ENCODE measurements at regions of chr19 and their contacts with region 1.

Region 1: GRCh38 chr19:48795055-48795684 is 15.7 kb downstream of the BCAT2 start:
- H3K4me3 ChIP-seq: peak overlapping the region; percentile 54
- H3K27ac ChIP-seq: no peak overlapping the region; the same call in 1 of the 2 replicates
- H3K4me1 ChIP-seq: no peaks in the 10 kb centered on the region
- CTCF ChIP-seq: peak; percentile 99

Region 2: DNA sequence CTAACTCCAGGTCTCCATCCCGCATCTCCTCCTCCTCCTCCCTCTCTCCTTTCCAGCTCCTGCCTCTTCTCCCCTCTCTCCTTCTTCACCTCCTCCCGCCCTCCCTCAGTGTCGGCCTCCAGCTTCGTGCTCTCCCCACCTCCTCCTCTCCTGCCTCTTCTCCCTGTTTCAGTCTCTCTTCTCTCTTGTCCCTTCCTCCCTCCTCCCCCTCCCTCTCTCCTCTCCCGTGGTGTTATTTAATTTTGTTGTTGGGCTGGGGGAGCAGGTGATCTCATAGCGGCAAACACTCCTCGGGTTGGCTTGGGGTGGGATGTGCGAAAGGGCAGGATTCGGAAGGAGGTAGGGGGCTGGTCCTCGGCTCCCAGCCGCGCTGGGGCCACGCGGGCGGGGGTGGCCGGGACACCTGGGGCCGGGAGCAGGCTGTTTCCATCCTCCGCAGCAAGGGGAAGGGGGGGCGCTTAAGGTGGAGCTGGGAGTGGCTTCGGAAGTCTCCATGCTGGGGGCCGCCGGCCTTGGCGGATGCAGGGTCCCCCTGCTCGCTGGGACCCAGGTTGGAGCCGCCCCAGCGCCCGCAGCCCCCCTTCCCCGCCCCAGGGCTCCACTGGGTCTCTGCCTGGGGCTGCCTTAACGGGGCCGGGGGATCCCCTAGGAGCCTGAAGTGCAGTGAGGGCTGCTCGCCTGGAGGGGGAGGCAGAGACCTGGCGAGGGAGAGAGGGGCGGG is 149.0 kb before region 1 on chr19 and contains the start of gene CA11:
- CTCF ChIA-PET with region 1: interaction called, 11 read pairs
- POLR2A ChIA-PET with region 1: interaction called, 9 read pairs
- H3K4me3 ChIP-seq: peak within 1 kb of the TSS; percentile 44
- H3K27ac ChIP-seq: peak within 1 kb of the TSS; percentile 70
- H3K4me1 ChIP-seq: peaks cover 9% of the 10 kb centered on the region
- CTCF ChIP-seq: peak; percentile 96

Region 3: DNA sequence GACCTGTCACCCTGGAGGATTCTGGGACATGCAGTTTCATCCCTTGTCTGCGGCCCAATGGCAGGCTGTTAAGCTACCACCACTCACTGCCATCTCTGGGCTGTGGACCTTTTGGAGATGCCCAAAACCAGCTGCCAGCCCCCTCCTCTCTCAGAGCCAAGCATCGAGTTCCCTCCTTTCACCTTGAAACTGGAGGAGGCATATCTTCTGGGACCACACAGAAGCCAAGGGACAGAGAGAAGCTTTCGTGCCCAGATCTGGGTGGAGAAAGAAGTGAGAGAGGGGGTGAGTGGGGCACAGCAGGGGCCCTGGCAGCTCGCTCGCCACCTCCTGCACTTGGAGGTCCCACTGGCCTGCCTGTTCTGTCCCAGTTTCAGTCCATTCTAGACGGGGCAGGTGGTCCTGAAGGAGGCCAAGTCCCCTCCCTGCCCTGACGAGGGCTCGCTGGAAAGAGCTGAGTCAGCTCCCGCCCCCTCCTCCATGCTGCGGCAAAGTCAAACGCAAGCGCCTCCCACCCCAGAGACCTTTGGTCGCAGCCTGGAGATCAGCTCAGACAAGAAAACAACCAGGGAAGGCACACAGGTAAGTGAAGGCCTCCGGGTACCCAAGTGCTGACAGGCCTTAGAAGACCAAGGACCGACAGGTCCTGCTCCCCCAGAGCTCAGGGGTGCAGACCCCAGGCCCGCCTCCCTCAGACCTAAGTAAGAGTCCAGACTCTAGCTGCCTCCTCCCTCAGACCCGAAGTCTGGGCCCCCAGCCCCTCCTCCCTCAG is 11.8 kb after region 1 on chr19:
- CTCF ChIA-PET with region 1: interaction called, 22 read pairs
- POLR2A ChIA-PET with region 1: interaction called, 28 read pairs
- H3K4me3 ChIP-seq: no peak overlapping the region
- H3K27ac ChIP-seq: no peak overlapping the region
- H3K4me1 ChIP-seq: peaks cover 5% of the 10 kb centered on the region
- CTCF ChIP-seq: no peak

Region 4: DNA sequence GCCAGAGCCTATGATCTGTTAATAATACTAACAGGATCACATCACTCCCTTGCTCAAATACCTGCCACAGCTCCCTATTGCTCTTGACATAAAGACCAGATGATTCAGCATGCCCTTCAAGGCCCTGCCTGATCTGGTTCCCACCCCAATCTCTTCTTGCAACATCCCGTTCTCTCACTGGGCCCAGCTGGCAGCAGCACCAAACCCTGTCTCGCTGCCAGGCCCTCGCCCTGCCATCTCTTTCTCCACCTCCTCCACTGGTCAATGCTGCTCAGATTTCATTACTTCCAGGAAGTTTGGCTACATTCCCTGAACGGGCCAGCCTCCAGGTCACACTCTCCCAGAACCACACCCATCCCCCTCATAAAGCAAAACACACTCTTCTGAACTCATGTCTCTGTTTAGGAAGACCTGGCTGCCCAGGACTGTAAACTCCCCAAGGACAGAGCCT is 24.2 kb after region 1 on chr19:
- CTCF ChIA-PET with region 1: interaction called, 22 read pairs
- POLR2A ChIA-PET with region 1: no interaction called
- H3K4me3 ChIP-seq: no peak overlapping the region
- H3K27ac ChIP-seq: no peak overlapping the region
- H3K4me1 ChIP-seq: peaks cover 4% of the 10 kb centered on the region; the same call in 1 of the 2 replicates
- CTCF ChIP-seq: no peak

Region 5: DNA sequence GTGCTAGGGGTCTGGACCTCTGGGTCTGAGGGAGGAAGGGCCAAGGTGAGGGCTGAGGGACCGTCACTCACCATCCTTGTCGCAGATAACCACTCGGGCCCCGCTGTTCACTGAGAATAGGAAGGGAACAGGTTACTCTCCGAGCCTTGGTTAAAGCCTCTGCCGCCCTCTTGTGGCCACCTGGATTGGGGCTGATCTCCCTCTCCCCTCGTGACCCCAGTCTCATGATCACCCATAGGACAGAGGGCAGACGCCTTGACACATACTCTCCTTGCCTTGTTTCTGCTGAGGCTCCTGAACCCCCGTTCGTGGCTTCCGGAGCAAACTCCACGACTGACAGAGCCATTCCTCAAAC is 40.5 kb after region 1 on chr19:
- CTCF ChIA-PET with region 1: interaction called, 160 read pairs
- POLR2A ChIA-PET with region 1: interaction called, 4 read pairs
- H3K4me3 ChIP-seq: no peak overlapping the region
- H3K27ac ChIP-seq: peak overlapping the region; percentile 37; the same call in 1 of the 2 replicates
- H3K4me1 ChIP-seq: no peaks in the 10 kb centered on the region; the same call in none of the 2 replicates
- CTCF ChIP-seq: peak; percentile 90

Measured in HEK293 (cell line).